PC-3 (cell line): ENCODE measurements at regions of chr12 and their contacts with region 1.

Region 1: DNA sequence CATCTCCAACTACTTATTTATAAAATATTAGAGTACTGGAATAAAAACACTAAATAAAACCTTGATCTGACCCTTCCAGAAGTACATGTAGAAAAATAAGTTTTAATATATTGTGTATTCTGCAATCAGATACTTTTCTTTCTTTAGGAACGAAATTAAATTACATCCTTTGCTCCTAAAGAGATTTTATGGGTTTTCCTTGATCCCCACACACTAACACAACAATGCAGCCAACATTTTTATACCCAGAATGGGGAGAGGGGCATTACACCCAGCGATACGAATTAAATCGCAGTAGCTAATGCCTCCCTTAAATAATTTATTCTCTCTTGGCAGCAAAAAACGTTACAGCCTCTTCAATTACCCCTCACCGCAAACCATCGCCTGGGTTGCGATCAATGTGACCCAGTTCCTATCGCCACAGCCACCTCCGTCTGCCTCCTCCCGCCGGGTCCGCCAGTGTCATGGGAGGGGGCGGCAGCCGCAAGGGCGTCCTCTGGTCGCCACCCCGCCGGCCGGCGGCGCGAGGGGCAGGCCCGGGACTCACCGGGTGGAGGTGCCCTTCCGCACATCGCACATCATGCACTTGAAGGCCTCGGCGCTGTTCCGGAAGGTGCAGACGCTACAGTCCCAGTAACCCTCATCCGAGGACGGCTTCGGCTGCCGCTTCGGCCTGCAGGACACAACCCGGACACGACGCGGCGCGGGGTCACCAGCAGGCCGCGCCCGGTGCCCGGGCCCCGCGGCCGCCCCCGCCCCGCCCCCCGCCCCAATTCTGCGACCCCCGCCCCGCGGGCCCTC is 796 bp downstream of the YAF2 start:
- DNase-seq: peak; percentile 68
- ATAC-seq: peak; percentile 74
- H3K4me3 ChIP-seq: peak overlapping the region; percentile 95
- H3K27ac ChIP-seq: no peak overlapping the region
- H3K4me1 ChIP-seq: peaks cover 19% of the 10 kb centered on the region
- H3K27me3 ChIP-seq: no peaks in the 10 kb centered on the region
- CTCF ChIP-seq: peak; percentile 47

Region 2: DNA sequence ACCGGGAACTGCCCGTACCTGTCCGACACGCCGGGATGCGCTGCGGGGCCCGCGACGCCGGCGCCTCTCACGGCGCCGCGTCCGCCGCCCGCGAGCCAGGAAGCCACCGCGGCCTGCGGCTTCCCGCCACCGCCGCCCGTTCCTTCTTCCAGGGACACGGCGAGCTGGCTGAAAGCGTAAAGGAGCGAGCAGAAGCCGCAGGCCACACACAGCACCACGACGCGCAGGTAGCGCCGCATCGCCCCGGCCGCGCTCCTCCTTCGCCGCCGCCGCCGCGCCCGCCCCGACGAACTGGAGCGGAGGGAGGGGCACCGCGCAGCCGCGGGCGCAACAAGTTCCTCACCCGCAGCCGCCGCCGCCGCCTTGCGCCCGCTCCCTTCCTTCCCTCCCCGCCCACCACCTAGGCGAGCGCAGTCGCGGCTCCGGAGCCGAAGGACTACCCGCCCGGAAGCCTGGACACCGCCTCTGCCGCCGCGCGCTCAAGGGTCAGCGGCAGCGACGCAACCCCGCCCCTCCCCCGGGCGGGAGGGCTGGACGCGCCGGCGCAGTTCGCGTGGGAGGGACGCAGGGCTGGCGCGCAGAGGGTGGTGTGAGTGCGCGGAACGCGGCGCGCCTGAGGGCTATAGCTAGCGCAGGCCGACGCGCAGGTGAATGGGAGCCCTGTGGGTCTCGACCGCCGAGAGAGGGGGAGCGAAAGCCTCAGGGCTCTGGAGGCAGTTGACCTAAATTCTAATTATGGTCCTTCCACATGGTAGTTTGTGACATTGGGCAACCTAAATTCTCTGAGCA is 92.7 kb before region 1 on chr12 and contains the start of gene GXYLT1:
- CTCF ChIA-PET with region 1: no interaction called
- POLR2A ChIA-PET with region 1: interaction called, 9 read pairs
- intact Hi-C with region 1: loop called (anchors 5 kb)
- DNase-seq: peak; percentile 97
- ATAC-seq: peak; percentile 93
- H3K4me3 ChIP-seq: peak within 1 kb of the TSS; percentile 86
- H3K27ac ChIP-seq: peak within 1 kb of the TSS; percentile 32
- H3K4me1 ChIP-seq: peaks cover 23% of the 10 kb centered on the region; the same call in 1 of the 2 replicates
- H3K27me3 ChIP-seq: no peaks in the 10 kb centered on the region
- CTCF ChIP-seq: no peak
- total RNA-seq, gene GXYLT1: 5.1 and 10.9 TPM in 2 replicates

Region 3: GRCh38 chr12:42284157-42284556 is 46.9 kb after region 1 on chr12:
- CTCF ChIA-PET with region 1: no interaction called
- POLR2A ChIA-PET with region 1: no interaction called
- intact Hi-C with region 1: no loop called
- DNase-seq: no peak
- ATAC-seq: no peak
- H3K4me3 ChIP-seq: no peak overlapping the region
- H3K27ac ChIP-seq: no peak overlapping the region
- H3K4me1 ChIP-seq: no peaks in the 10 kb centered on the region
- H3K27me3 ChIP-seq: no peaks in the 10 kb centered on the region
- CTCF ChIP-seq: no peak

Region 4: DNA sequence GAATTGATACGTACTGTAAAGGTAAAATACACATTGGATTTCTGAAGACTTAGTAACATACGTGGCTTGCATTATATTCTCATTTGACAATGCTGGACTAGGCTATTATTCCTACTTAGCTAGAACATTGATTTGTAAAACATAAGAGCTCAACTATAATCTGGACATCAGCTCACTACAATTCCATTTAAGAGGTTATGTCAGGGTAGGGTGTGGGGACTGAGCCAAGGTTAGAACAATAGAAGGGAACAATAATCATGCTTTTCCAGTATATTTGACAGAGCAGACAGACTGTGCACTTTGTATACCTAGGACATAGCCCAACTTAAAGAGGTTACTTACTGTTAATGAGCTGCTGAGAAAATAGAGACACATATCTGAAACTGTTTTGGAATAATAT is 77.9 kb after region 1 on chr12:
- CTCF ChIA-PET with region 1: no interaction called
- POLR2A ChIA-PET with region 1: interaction called, 13 read pairs
- intact Hi-C with region 1: no loop called
- DNase-seq: no peak
- ATAC-seq: no peak
- H3K4me3 ChIP-seq: no peak overlapping the region
- H3K27ac ChIP-seq: no peak overlapping the region
- H3K4me1 ChIP-seq: no peaks in the 10 kb centered on the region
- H3K27me3 ChIP-seq: no peaks in the 10 kb centered on the region
- CTCF ChIP-seq: no peak

Region 5: DNA sequence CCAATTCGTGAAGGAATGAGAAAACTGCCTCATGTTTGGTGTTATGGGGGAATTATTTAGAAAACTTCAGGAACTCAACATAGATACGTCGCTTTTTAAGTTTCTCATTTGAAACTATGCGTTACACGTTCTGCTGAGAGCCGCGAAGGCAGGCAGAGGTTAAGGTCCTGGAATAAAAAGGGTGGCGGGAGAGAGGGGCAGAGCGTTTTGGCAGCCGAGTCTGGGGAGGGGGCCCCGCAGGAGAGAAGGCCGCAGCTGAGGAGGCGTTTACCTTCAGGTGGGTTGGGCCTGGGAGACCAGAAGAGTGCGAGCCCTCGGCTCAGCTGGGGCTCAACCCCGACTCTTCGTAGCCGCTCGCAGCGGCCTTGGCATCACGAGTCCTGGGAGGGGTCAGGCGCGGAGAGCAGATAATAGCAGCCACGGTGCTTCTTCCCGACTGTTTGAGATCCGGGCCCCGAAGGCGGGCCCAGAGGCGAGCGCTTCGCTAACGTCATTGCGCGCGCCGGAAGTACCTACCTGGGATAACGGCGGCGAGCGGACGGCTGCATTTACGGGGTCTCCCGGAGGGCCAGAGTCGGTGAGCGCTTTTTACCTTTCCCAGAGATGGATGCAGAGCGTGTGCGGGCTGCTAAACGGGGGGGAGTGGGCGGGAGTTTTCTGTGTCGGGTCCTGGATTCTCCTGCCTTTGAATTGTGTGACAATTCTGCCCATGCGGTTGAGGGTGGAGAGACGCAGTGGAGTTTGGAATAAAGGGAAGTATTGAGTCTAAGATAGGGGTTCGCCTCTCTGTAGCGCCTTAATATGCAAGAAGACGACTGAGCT is 88.6 kb after region 1 on chr12 and contains the starts of genes PPHLN1 and ZCRB1:
- CTCF ChIA-PET with region 1: no interaction called
- POLR2A ChIA-PET with region 1: no interaction called
- intact Hi-C with region 1: loop called (anchors 5 kb)
- DNase-seq: peak; percentile 82
- ATAC-seq: peak; percentile 92
- H3K4me3 ChIP-seq: peak within 1 kb of the TSS; percentile 76
- H3K27ac ChIP-seq: peak within 1 kb of the TSS; percentile 22
- H3K4me1 ChIP-seq: peaks cover 17% of the 10 kb centered on the region
- H3K27me3 ChIP-seq: no peaks in the 10 kb centered on the region
- CTCF ChIP-seq: no peak
- total RNA-seq, gene PPHLN1: 67.6 and 82.0 TPM in 2 replicates
- total RNA-seq, gene ZCRB1: 29.7 and 33.9 TPM in 2 replicates